Caco-2 (cell line): ENCODE measurements at regions of chr10 and their contacts with region 1.

Region 1: DNA sequence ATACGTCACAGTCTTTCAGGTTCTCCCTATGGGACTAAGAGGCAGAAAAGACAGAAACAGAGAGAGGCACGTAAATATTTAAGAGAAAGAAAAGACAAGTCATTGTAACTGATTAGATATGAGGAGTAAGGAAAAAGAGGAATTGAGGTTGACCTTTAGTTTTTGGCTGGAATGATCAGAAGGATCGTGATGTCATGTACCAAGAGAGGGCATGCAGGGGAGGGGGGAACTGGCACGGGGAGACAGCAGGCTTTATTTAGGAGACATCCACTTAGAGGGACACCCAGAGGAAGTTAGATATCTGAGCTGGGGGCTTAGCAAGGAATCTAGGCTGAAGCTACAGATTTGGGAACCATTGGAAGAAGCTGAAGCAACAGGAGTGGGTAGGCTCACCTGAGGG is 9.2 kb upstream of the LRRC20 start:
- DNase-seq: no peak
- H3K4me3 ChIP-seq: no peak overlapping the region
- H3K4me3 Mint-ChIP-seq: no peak overlapping the region
- H3K27ac Mint-ChIP-seq: no peak overlapping the region
- H3K4me1 ChIP-seq: peaks cover 4% of the 10 kb centered on the region; the same call in 1 of the 2 replicates
- H3K4me1 Mint-ChIP-seq: peaks cover 24% of the 10 kb centered on the region
- H3K27me3 ChIP-seq: no peaks in the 10 kb centered on the region
- H3K27me3 Mint-ChIP-seq: no peaks in the 10 kb centered on the region
- CTCF ChIP-seq: no peak

Region 2: DNA sequence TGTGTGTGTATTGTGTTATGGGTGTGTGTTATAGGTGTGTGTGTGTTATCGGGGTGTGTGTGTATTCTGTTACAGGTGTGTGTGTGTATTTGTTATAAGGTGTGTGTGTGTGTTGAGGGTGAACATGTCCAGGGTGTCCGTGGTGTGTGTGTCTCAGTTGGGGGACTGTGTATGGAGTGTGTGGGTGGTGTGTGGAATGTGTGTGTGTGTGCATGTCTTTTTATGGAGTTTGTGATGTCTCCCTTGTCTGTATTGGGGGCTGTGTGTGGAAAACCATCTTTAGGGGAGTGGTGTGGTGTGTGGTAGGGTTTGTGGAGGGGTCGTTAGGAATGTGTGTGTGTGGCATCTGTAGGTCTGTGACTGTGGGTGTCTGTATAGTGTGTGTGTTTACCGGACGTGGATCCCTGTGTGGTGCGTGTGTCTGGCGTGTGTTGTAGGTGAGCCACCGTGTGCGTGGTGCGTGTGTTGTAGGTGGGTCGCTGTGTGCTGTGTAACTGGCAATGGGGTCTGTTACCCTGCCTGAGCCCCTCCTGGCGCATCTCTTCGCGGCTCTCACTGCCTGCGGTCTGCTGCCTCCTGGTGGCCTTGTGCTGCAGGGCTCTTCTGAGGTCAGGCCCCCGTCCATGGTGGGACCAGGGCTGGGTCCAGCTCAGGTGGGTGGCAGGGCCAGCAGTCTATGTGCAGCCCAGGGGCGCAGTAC is 148.6 kb after region 1 on chr10:
- CTCF ChIA-PET with region 1: interaction called, 3 read pairs
- POLR2A ChIA-PET with region 1: no interaction called
- intact Hi-C with region 1: loop called (anchors 1 kb)
- DNase-seq: peak in 1 of 2 experiments; percentile 67
- H3K4me3 ChIP-seq: no peak overlapping the region
- H3K4me3 Mint-ChIP-seq: no peak overlapping the region
- H3K27ac Mint-ChIP-seq: no peak overlapping the region
- H3K4me1 ChIP-seq: no peaks in the 10 kb centered on the region
- H3K4me1 Mint-ChIP-seq: no peaks in the 10 kb centered on the region
- H3K27me3 ChIP-seq: no peaks in the 10 kb centered on the region
- H3K27me3 Mint-ChIP-seq: no peaks in the 10 kb centered on the region
- CTCF ChIP-seq: peak; percentile 86 to 94